ENCODE measurements at regions of chr2 and their contacts with region 1.

Region 1: GRCh38 chr2:191176801-191177438 is 26.1 kb upstream of the STAT4 start:
- DNase-seq: peak; percentile 66
- ATAC-seq: peak; percentile 78
- H3K4me3 ChIP-seq: no peak overlapping the region
- H3K27ac ChIP-seq: peak overlapping the region; percentile 42
- H3K4me1 ChIP-seq: peaks cover 47% of the 10 kb centered on the region
- H3K27me3 ChIP-seq: no peaks in the 10 kb centered on the region
- CTCF ChIP-seq: no peak

Region 2: DNA sequence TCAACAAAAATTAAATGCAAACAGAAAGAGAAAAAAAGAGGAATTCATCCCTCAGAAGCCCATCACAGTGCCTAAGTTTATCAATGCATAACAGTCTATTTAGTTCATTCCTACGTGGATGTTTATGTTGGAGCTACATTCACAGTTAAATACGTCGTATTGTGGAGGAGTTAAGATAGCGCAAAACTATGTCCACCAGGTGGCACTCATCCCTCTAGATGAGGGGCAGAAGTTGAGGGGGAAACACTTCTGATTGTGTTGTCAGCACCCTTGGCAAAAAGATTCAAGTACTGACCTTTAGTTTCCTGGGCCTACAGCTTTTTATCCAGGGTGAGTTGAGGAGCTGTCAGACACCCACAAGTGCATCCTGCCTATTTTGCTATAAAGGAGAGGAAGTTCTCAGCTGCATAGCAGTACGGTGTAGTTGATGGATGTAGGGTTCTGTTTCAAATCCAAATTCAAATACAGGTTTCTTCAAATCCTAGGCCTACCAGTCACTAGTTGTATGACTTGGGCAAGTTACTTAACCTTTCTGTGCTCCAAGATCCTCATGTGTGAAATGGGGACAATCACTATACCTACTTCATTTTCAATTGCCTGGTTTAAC is 41.5 kb after region 1 on chr2:
- CTCF ChIA-PET with region 1: interaction called, 3 read pairs
- POLR2A ChIA-PET with region 1: interaction called, 3 read pairs
- intact Hi-C with region 1: loop called (anchors 1 kb)
- DNase-seq: peak; percentile 85
- ATAC-seq: peak; percentile 17; the same call in 1 of the 2 replicates
- H3K4me3 ChIP-seq: peak overlapping the region; percentile 15; the same call in 1 of the 2 replicates
- H3K27ac ChIP-seq: peak overlapping the region; percentile 84
- H3K4me1 ChIP-seq: peaks cover 49% of the 10 kb centered on the region
- H3K27me3 ChIP-seq: no peaks in the 10 kb centered on the region
- CTCF ChIP-seq: peak; percentile 88

Measured in PC-3 (cell line).